B cell (primary cell): ENCODE measurements at regions of chr10 and their contacts with region 1.

Region 1: DNA sequence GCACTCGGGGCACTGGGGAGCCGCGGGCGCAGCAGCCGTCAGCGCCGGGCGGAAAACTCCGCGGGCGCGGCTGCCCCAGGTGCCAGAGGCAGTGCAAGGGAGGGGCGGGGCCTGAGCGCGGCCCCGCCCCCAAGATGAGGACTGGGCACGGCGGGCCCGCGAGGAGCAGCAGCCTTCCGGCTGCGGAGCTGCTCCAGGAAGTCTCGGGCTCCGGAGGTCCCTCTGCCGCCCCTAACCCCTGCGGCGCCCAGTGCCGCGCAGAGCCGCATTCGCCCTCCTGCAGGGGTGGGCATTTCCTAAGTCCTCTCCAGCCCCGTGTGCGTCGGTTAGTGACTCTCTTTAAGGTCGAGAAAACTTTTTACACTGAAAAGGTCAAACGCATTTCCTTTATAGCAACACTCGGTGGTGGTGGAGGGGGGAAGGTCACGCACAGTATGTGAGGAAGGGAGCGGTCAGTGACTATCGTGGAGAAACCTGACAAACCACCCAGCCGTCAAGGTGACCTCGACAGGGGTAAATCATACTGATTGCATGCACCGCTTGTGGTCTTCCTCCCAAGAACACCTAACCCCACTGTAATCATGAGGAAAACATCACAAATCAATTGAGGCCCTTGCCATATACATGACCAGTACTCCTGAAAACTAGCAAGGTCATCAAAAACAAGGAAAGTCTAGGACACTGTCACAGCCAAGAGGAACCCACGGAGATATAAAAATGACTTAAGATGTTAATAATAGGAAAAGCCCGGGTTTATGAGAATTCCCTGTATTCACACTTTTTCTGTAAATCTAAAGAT is at the start of gene ANXA11:
- DNase-seq: peak; percentile 90
- ATAC-seq: peak; percentile 87
- H3K4me3 ChIP-seq: peak within 1 kb of the TSS; percentile 53 to 90 (median 74)
- H3K4me3 Mint-ChIP-seq: peak within 1 kb of the TSS; percentile 94
- H3K27ac ChIP-seq: peak within 1 kb of the TSS; percentile 75 to 91
- H3K27ac Mint-ChIP-seq: peak within 1 kb of the TSS; percentile 97
- H3K4me1 ChIP-seq: peaks cover 41 to 50% of the 10 kb centered on the region in 2 donors
- H3K4me1 Mint-ChIP-seq: peaks cover 50% of the 10 kb centered on the region
- H3K27me3 ChIP-seq: peaks cover 0 to 2% (median 0%) of the 10 kb centered on the region in 4 experiments
- H3K27me3 Mint-ChIP-seq: no peaks in the 10 kb centered on the region
- CTCF ChIP-seq: no peak
- total RNA-seq, gene ANXA11: 156 and 177 TPM in 2 replicates

Region 2: GRCh38 chr10:79445141-79445976 is 760.3 kb before region 1 on chr10 and contains the start of gene ZCCHC24:
- CTCF ChIA-PET with region 1: no interaction called
- POLR2A ChIA-PET with region 1: no interaction called
- intact Hi-C with region 1: loop called (anchors 10 kb)
- DNase-seq: peak; percentile 97
- ATAC-seq: peak; percentile 91
- H3K4me3 ChIP-seq: peak within 1 kb of the TSS; percentile 44 to 73 (median 65)
- H3K4me3 Mint-ChIP-seq: peak within 1 kb of the TSS; percentile 94
- H3K27ac ChIP-seq: no peak within 1 kb of the TSS
- H3K27ac Mint-ChIP-seq: peak within 1 kb of the TSS; percentile 86
- H3K4me1 ChIP-seq: peaks cover 18 to 29% of the 10 kb centered on the region in 2 donors
- H3K4me1 Mint-ChIP-seq: peaks cover 26% of the 10 kb centered on the region
- H3K27me3 ChIP-seq: peaks cover 0 to 12% (median 5%) of the 10 kb centered on the region in 4 experiments
- H3K27me3 Mint-ChIP-seq: no peaks in the 10 kb centered on the region
- CTCF ChIP-seq: no peak
- total RNA-seq, gene ZCCHC24: 2.1 and 2.3 TPM in 2 replicates

Region 3: DNA sequence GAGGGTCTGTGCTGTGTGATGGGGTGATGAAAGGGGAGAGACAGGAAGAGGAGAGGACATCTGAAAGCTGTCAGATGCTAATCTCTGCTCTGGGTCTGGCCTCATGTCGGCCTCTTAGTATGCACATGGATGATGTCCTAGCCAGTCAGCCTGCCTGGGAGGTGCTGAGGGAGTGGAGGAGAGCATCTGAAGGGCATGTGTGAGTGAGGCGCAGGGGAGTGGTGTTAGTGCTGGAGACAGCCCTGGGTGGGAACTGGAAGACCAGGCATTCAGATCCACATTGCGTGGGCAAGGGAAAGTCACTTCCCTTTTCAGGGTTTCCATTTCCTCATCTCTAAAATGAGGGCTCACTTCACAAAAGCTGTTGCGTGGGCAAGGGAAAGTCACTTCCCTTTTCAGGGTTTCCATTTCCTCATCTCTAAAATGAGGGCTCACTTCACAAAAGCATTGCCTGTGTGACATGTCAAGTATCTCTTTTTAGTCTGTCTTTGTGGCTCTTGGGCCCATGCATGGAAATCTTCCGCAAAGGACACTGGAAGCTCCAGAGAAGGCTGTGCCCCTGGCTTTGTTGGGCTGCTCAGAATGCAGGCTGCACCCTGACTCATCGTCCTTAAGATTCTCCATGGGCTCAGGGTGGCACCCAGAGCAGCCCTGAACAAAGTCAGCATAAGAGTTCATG is 266.8 kb before region 1 on chr10:
- CTCF ChIA-PET with region 1: no interaction called
- POLR2A ChIA-PET with region 1: no interaction called
- intact Hi-C with region 1: loop called (anchors 5 kb)
- DNase-seq: peak; percentile 91
- ATAC-seq: peak; percentile 81
- H3K4me3 ChIP-seq: peak overlapping the region in 1 of 5 experiments; percentile 29
- H3K4me3 Mint-ChIP-seq: peak overlapping the region; percentile 80
- H3K27ac ChIP-seq: peak overlapping the region; percentile 78 to 88
- H3K27ac Mint-ChIP-seq: peak overlapping the region; percentile 97
- H3K4me1 ChIP-seq: peaks cover 42 to 45% of the 10 kb centered on the region in 2 donors
- H3K4me1 Mint-ChIP-seq: peaks cover 55% of the 10 kb centered on the region
- H3K27me3 ChIP-seq: no peaks in the 10 kb centered on the region
- H3K27me3 Mint-ChIP-seq: peaks cover 5% of the 10 kb centered on the region
- CTCF ChIP-seq: no peak

Region 4: DNA sequence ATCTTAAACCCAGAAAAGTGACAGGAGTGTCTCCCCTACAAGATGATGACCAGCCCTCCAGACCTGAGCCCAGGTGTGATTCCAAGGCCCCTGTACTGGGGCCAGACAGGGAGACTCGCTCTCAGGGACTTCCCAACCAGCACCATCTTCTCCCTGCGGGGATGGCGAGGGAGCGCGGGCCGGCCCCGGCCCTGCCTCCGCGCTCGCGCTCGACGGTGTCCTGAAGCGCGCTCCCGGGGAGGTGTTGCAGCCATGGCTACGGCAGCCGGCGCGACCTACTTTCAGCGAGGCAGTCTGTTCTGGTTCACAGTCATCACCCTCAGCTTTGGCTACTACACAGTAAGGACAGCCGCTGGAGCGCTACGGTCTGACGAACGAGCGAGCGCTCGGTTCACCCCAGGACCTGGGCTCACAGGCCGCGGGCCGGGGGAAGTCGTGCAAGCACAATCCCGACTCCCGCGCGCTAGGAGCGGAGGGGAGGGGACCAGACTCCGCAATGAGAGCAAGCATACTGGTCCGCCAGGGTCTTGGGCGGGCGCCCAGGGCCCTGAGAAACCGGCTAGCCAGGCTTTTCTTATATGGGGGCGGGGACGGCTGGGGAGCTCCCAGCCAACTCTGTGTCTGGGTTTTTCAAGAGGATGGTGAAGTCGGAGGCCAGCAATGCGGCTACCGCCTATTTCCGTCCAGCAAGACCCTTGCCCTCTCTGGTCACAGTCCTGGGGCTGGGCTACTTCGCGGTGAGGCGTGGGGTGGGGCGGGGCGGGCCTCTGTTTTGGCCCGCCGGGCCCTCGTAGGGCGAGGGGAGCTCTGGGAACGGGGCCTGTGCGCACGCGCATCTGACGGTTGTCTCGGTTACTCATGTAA is 127.0 kb before region 1 on chr10 and contains the start of gene TMEM254:
- CTCF ChIA-PET with region 1: interaction called, 5 read pairs
- POLR2A ChIA-PET with region 1: no interaction called
- intact Hi-C with region 1: loop called (anchors 5 kb)
- DNase-seq: peak; percentile 92
- ATAC-seq: peak; percentile 86
- H3K4me3 ChIP-seq: peak within 1 kb of the TSS; percentile 74 to 98 (median 97)
- H3K4me3 Mint-ChIP-seq: peak within 1 kb of the TSS; percentile 97
- H3K27ac ChIP-seq: peak within 1 kb of the TSS; percentile 84 to 90
- H3K27ac Mint-ChIP-seq: peak within 1 kb of the TSS; percentile 92
- H3K4me1 ChIP-seq: peaks cover 11 to 15% of the 10 kb centered on the region in 2 donors
- H3K4me1 Mint-ChIP-seq: peaks cover 16% of the 10 kb centered on the region
- H3K27me3 ChIP-seq: no peaks in the 10 kb centered on the region
- H3K27me3 Mint-ChIP-seq: no peaks in the 10 kb centered on the region
- CTCF ChIP-seq: no peak
- total RNA-seq, gene TMEM254: 13.1 and 13.7 TPM in 2 replicates

Region 5: DNA sequence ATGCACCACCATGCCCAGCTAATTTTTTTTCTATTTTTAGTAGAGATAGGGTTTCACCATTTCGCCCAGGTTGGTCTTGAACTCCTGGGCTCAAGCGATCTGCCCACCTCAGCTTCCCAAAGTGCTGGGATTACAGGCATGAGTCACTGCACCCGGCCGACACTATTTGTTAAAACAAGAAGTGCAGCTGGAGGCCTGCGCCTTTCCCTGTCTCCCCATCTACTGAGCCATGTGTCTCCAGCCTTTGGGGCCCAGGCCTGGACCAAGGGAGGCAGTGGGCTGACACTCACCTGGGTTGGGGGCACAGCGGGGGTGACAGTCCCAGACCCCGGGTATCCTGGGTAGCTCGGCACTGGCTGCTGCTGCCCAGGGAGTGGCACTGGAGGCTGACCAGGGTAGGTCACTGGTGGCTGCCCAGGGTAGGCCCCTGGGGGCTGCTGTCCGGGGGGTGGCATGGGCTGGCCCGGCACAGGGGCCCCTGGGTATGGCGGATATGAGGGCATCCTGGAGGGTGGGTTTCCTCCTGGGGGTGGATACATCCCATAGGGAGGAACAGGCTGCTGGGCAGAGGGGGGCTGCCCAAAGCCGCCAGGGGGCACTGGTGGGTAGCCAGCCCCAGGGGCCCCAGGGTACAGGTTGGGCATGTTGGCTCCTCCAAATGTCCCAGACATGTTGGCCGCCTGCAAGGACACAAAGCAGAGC is 36.8 kb before region 1 on chr10:
- CTCF ChIA-PET with region 1: interaction called, 5 read pairs
- POLR2A ChIA-PET with region 1: no interaction called
- intact Hi-C with region 1: loop called (anchors 5 kb)
- DNase-seq: peak; percentile 30
- ATAC-seq: peak; percentile 56
- H3K4me3 ChIP-seq: no peak overlapping the region
- H3K4me3 Mint-ChIP-seq: no peak overlapping the region
- H3K27ac ChIP-seq: no peak overlapping the region
- H3K27ac Mint-ChIP-seq: no peak overlapping the region
- H3K4me1 ChIP-seq: no peaks in the 10 kb centered on the region
- H3K4me1 Mint-ChIP-seq: peaks cover 3% of the 10 kb centered on the region
- H3K27me3 ChIP-seq: no peaks in the 10 kb centered on the region
- H3K27me3 Mint-ChIP-seq: no peaks in the 10 kb centered on the region
- CTCF ChIP-seq: peak; percentile 35

Region 6: DNA sequence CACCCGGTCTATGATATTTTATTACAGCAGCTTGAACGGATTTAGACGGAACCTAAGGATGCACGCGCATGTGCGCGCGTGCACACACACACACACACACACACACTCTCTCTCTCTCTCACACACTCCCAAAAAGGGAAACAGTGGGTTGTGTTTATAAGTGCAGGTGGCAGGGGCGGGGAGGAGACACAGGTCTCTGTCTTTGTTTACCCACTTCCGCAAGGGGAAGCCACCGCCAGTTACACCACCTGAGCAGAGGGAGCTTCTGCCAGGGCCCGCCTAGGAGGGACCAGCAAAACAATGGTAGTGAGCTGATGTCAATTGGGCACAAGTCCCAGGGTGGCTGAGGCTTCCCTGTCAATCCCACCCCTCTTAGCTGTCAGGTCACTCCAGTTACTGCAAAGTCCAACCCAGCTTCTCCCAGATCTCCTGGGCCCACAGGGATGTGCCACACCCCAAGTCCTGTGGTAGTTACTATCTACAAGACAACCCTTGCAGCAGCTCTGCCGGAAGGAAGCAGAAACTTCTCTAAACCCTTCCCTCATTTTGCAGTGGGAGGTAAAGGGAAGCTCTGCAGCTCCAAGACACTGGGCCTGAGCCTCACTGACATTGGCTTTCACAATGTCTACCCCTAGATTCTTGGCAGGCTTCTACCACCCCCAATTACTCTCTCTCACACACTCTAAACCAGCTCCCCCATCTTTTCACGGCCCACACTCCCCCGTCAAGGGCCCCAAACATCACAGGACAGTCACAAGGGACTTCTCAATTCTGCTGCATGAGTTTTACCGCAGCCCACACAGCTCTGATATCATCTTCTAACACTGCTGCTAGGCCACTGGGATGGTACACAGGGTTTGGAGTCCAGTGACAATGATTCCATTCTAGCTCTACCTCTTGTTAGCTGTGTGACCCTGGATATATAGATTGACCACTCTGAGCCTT is 17.9 kb before region 1 on chr10:
- CTCF ChIA-PET with region 1: interaction called, 85 read pairs
- POLR2A ChIA-PET with region 1: interaction called, 33 read pairs
- intact Hi-C with region 1: loop called (anchors 1 kb)
- DNase-seq: peak; percentile 94
- ATAC-seq: peak; percentile 91
- H3K4me3 ChIP-seq: peak overlapping the region; percentile 20 to 63 (median 43)
- H3K4me3 Mint-ChIP-seq: peak overlapping the region; percentile 78
- H3K27ac ChIP-seq: peak overlapping the region; percentile 94 to 96
- H3K27ac Mint-ChIP-seq: peak overlapping the region; percentile 94
- H3K4me1 ChIP-seq: peaks cover 63% of the 10 kb centered on the region in 2 donors
- H3K4me1 Mint-ChIP-seq: peaks cover 79% of the 10 kb centered on the region
- H3K27me3 ChIP-seq: no peaks in the 10 kb centered on the region
- H3K27me3 Mint-ChIP-seq: no peaks in the 10 kb centered on the region
- CTCF ChIP-seq: no peak

Region 7: GRCh38 chr10:80443531-80443974 is 237.9 kb after region 1 on chr10:
- CTCF ChIA-PET with region 1: no interaction called
- POLR2A ChIA-PET with region 1: no interaction called
- intact Hi-C with region 1: no loop called
- DNase-seq: no peak
- ATAC-seq: peak; percentile 22
- H3K4me3 ChIP-seq: no peak overlapping the region
- H3K4me3 Mint-ChIP-seq: no peak overlapping the region
- H3K27ac ChIP-seq: no peak overlapping the region
- H3K27ac Mint-ChIP-seq: no peak overlapping the region
- H3K4me1 ChIP-seq: peaks cover 0 to 6% of the 10 kb centered on the region in 2 donors
- H3K4me1 Mint-ChIP-seq: peaks cover 4% of the 10 kb centered on the region
- H3K27me3 ChIP-seq: no peaks in the 10 kb centered on the region
- H3K27me3 Mint-ChIP-seq: no peaks in the 10 kb centered on the region
- CTCF ChIP-seq: no peak

Region 8: GRCh38 chr10:80453701-80454513 is 248.2 kb after region 1 on chr10 and contains the start of gene TSPAN14:
- CTCF ChIA-PET with region 1: no interaction called
- POLR2A ChIA-PET with region 1: no interaction called
- intact Hi-C with region 1: loop called (anchors 2 kb)
- DNase-seq: peak; percentile 88
- ATAC-seq: peak; percentile 79
- H3K4me3 ChIP-seq: peak within 1 kb of the TSS; percentile 58 to 92 (median 77)
- H3K4me3 Mint-ChIP-seq: peak within 1 kb of the TSS; percentile 94
- H3K27ac ChIP-seq: peak within 1 kb of the TSS; percentile 62 to 83
- H3K27ac Mint-ChIP-seq: peak within 1 kb of the TSS; percentile 94
- H3K4me1 ChIP-seq: peaks cover 31 to 47% of the 10 kb centered on the region in 2 donors
- H3K4me1 Mint-ChIP-seq: peaks cover 47% of the 10 kb centered on the region
- H3K27me3 ChIP-seq: no peaks in the 10 kb centered on the region
- H3K27me3 Mint-ChIP-seq: no peaks in the 10 kb centered on the region
- CTCF ChIP-seq: no peak
- total RNA-seq, gene TSPAN14: 54.9 and 55.3 TPM in 2 replicates

Region 9: DNA sequence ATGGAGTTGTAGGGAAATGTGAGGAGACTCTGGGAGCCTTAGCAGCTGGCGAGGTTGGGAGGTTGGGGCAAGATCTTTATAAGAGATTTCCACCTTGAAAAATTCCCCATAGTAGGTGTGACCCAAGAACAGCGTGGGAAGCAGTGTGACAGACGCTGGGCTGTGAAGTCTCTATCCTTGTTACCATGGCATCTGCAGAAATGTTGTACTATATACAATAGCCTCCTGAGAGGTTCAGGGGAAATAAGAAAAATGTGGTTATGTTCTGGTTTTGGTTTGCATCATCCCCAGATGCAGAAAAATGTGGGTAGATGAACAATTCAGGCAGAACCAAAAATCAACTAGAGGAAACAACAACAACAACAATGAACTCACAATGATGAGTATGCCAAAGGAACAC is 830.6 kb after region 1 on chr10:
- CTCF ChIA-PET with region 1: no interaction called
- POLR2A ChIA-PET with region 1: no interaction called
- intact Hi-C with region 1: no loop called
- DNase-seq: no peak
- ATAC-seq: no peak
- H3K4me3 ChIP-seq: no peak overlapping the region
- H3K4me3 Mint-ChIP-seq: no peak overlapping the region
- H3K27ac ChIP-seq: no peak overlapping the region
- H3K27ac Mint-ChIP-seq: no peak overlapping the region
- H3K4me1 ChIP-seq: no peaks in the 10 kb centered on the region
- H3K4me1 Mint-ChIP-seq: no peaks in the 10 kb centered on the region
- H3K27me3 ChIP-seq: no peaks in the 10 kb centered on the region
- H3K27me3 Mint-ChIP-seq: no peaks in the 10 kb centered on the region
- CTCF ChIP-seq: no peak